ENCODE measurements at regions of chr1 and their contacts with region 1.

Region 1: GRCh38 chr1:236394905-236395780 is 1.1 kb downstream of the EDARADD start:
- DNase-seq: peak in 12 of 14 experiments; percentile 10 to 75 (median 38)
- ATAC-seq: peak; percentile 75
- H3K4me3 ChIP-seq: peak overlapping the region; percentile 79
- H3K4me3 Mint-ChIP-seq: peak overlapping the region; percentile 92
- H3K27ac ChIP-seq: peak overlapping the region in 1 of 2 donors; percentile 9
- H3K27ac Mint-ChIP-seq: peak overlapping the region; percentile 72
- H3K4me1 ChIP-seq: peaks cover 19% of the 10 kb centered on the region
- H3K4me1 Mint-ChIP-seq: peaks cover 40% of the 10 kb centered on the region
- H3K27me3 ChIP-seq: peaks cover 7 to 22% of the 10 kb centered on the region in 2 experiments
- H3K27me3 Mint-ChIP-seq: peaks cover 74% of the 10 kb centered on the region
- CTCF ChIP-seq: no peak

Region 2: GRCh38 chr1:236416165-236416564 is 21.0 kb after region 1 on chr1:
- CTCF ChIA-PET with region 1: interaction called, 3 read pairs
- POLR2A ChIA-PET with region 1: interaction called, 25 read pairs
- intact Hi-C with region 1: no loop called
- DNase-seq: peak in 9 of 14 experiments; percentile 2 to 91 (median 29)
- ATAC-seq: peak; percentile 93
- H3K4me3 ChIP-seq: peak overlapping the region; percentile 33
- H3K4me3 Mint-ChIP-seq: peak overlapping the region; percentile 69
- H3K27ac ChIP-seq: peak overlapping the region; percentile 63 to 94
- H3K27ac Mint-ChIP-seq: peak overlapping the region; percentile 87
- H3K4me1 ChIP-seq: peaks cover 20% of the 10 kb centered on the region
- H3K4me1 Mint-ChIP-seq: peaks cover 20% of the 10 kb centered on the region
- H3K27me3 ChIP-seq: no peaks in the 10 kb centered on the region
- H3K27me3 Mint-ChIP-seq: no peaks in the 10 kb centered on the region
- CTCF ChIP-seq: no peak

Region 3: GRCh38 chr1:236523701-236524141 is 128.6 kb after region 1 on chr1 and contains the start of gene LGALS8:
- CTCF ChIA-PET with region 1: no interaction called
- POLR2A ChIA-PET with region 1: no interaction called
- intact Hi-C with region 1: no loop called
- DNase-seq: peak; percentile 73 to 92 (median 83)
- ATAC-seq: peak; percentile 80
- H3K4me3 ChIP-seq: peak within 1 kb of the TSS; percentile 82
- H3K4me3 Mint-ChIP-seq: peak within 1 kb of the TSS; percentile 99
- H3K27ac ChIP-seq: peak within 1 kb of the TSS; percentile 82 to 85
- H3K27ac Mint-ChIP-seq: peak within 1 kb of the TSS; percentile 97
- H3K4me1 ChIP-seq: peaks cover 12% of the 10 kb centered on the region
- H3K4me1 Mint-ChIP-seq: peaks cover 40% of the 10 kb centered on the region
- H3K27me3 ChIP-seq: no peaks in the 10 kb centered on the region
- H3K27me3 Mint-ChIP-seq: no peaks in the 10 kb centered on the region
- CTCF ChIP-seq: no peak
- total RNA-seq, gene LGALS8: 138 to 144 TPM